AG04450 (cell line): ENCODE measurements at regions of chr19 and their contacts with region 1.

Region 1: GRCh38 chr19:33039815-33040214 is 24.9 kb downstream of the RHPN2 start:
- DNase-seq: no peak
- H3K4me3 ChIP-seq: no peak overlapping the region
- H3K27ac ChIP-seq: no peak overlapping the region
- H3K27me3 ChIP-seq: no peaks in the 10 kb centered on the region
- CTCF ChIP-seq: no peak

Region 2: GRCh38 chr19:31627620-31628361 is 1412.0 kb before region 1 on chr19:
- CTCF ChIA-PET with region 1: no interaction called
- POLR2A ChIA-PET with region 1: no interaction called
- DNase-seq: no peak
- H3K4me3 ChIP-seq: no peak overlapping the region
- H3K27ac ChIP-seq: no peak overlapping the region
- H3K27me3 ChIP-seq: no peaks in the 10 kb centered on the region
- CTCF ChIP-seq: no peak

Region 3: GRCh38 chr19:33080761-33081681 is 41.2 kb after region 1 on chr19 and contains the start of gene GPATCH1:
- CTCF ChIA-PET with region 1: interaction called, 3 read pairs
- POLR2A ChIA-PET with region 1: interaction called, 12 read pairs
- DNase-seq: peak; percentile 53
- H3K4me3 ChIP-seq: peak within 1 kb of the TSS; percentile 93
- H3K27ac ChIP-seq: peak within 1 kb of the TSS; percentile 39
- H3K27me3 ChIP-seq: no peaks in the 10 kb centered on the region
- CTCF ChIP-seq: no peak
- polyA plus RNA-seq, gene GPATCH1: 7.0 and 7.9 TPM in 2 replicates